ENCODE measurements at regions of chrX and their contacts with region 1.

Region 1: GRCh38 chrX:30713061-30713525 is 59.9 kb downstream of the GK start:
- DNase-seq: peak; percentile 82
- H3K4me3 Mint-ChIP-seq: peak overlapping the region; percentile 47
- H3K27ac Mint-ChIP-seq: peak overlapping the region; percentile 95
- H3K4me1 Mint-ChIP-seq: peaks cover 35% of the 10 kb centered on the region
- H3K27me3 Mint-ChIP-seq: no peaks in the 10 kb centered on the region

Region 2: DNA sequence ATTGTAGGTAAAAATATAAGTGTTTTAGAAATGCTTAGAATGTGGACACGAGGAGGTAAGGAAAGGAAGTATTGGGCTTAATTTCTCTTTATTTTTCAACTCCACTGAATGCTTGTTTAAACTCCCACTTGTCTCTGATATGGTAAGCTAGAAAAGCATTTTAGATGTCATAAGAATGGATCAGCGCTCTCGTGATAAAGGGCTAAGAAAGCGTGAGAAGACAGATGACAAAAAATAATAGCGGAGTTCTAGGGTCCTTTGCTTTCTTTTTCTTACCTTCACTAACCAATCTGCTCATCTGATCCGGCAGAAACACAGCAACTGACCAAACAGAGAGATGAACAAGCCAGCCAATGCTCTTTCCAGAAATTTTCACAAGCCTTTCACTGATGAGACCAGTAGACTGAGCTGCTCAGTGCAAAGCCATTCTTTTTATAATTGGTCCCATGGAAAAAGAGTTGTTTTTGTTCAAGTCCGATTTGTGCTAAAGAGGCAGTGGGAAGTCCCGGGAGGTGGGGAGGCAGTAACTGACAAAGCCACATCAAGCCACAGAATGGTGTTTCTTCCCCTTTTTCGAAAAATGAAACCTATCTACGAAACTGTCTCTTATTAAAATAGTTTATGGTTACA is 135.6 kb before region 1 on chrX and contains the start of gene TASL:
- intact Hi-C with region 1: loop called (anchors 2 kb)
- DNase-seq: peak; percentile 83
- H3K4me3 Mint-ChIP-seq: peak within 1 kb of the TSS; percentile 95
- H3K27ac Mint-ChIP-seq: peak within 1 kb of the TSS; percentile 98
- H3K4me1 Mint-ChIP-seq: peaks cover 13% of the 10 kb centered on the region
- H3K27me3 Mint-ChIP-seq: no peaks in the 10 kb centered on the region
- total RNA-seq, gene TASL: 4.2 and 5.1 TPM in 2 replicates

Region 3: GRCh38 chrX:30643313-30643821 is 69.7 kb before region 1 on chrX:
- intact Hi-C with region 1: loop called (anchors 1 kb)
- DNase-seq: peak; percentile 65
- H3K4me3 Mint-ChIP-seq: peak overlapping the region; percentile 9
- H3K27ac Mint-ChIP-seq: peak overlapping the region; percentile 91
- H3K4me1 Mint-ChIP-seq: peaks cover 23% of the 10 kb centered on the region
- H3K27me3 Mint-ChIP-seq: no peaks in the 10 kb centered on the region

Region 4: DNA sequence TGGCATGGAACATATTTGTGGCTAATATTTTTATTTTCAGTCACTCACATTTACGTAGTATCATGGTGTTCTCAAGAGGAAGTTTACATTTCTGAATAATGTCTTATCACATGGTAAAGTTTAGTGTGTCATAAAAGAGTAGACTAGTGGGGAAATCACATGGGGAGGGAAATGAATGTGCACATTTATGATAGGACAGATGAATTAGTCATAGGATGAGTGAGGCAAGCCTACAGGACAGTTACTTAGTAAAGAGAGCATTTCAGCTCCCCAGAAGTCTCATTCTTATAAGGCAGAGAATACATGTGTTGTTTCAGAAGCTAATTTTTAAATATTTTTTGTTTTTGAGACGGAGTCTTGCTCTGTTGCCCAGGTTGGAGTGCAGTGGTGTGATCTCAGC is 53.7 kb before region 1 on chrX:
- intact Hi-C with region 1: loop called (anchors 1 kb)
- DNase-seq: peak; percentile 59
- H3K4me3 Mint-ChIP-seq: peak overlapping the region; percentile 49
- H3K27ac Mint-ChIP-seq: peak overlapping the region; percentile 88
- H3K4me1 Mint-ChIP-seq: peaks cover 35% of the 10 kb centered on the region
- H3K27me3 Mint-ChIP-seq: no peaks in the 10 kb centered on the region

Region 5: DNA sequence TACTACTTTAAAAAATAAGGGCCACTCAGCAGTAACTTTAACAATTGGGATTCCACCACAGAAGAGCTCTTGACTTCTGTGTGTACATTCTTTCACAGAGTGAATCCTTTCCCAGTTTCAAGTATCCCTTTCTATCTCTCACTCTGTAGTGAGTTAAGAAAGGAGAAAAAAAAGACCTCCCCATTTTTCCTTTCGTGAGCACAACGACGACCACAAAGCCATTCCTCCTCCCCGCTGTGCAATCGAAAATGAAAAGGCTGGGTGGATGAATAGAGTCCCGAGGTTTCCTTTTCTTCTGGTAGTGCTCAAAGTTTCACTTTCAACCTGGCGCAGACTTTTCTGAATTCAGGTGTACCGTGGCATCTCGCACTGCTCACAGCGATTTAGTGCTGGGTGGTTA is 118.0 kb after region 1 on chrX:
- intact Hi-C with region 1: loop called (anchors 2 kb)
- DNase-seq: peak; percentile 83
- H3K4me3 Mint-ChIP-seq: peak overlapping the region; percentile 78
- H3K27ac Mint-ChIP-seq: peak overlapping the region; percentile 82
- H3K4me1 Mint-ChIP-seq: peaks cover 21% of the 10 kb centered on the region
- H3K27me3 Mint-ChIP-seq: no peaks in the 10 kb centered on the region

Region 6: DNA sequence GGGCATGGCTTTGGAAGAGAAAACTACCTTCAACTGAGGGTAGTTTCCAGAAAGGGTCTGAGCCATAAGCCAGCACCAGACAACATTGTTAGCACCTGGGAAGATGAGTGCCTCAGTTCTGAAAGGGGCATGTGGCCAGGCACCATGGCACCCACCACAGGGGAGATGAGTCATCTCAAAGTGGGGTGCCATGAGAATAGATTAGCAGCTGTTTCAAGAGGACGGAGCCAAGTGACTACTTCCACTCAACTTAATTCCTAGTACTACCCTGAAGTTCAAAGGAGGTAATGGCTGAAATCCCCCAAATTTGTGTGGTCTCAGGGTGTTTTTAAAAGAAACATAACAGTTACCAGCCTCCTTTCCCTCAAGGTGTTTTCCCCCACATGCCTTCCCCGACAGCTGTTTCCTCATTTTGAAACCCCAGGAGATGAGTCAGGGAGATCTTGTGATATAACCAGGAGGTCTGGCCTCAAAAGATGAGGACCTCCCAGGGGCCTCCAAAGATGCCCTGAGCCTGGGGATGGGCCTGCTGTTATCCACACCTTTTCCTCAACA is 386.5 kb after region 1 on chrX:
- intact Hi-C with region 1: loop called (anchors 10 kb)
- DNase-seq: peak; percentile 79
- H3K4me3 Mint-ChIP-seq: no peak overlapping the region
- H3K27ac Mint-ChIP-seq: peak overlapping the region; percentile 79
- H3K4me1 Mint-ChIP-seq: peaks cover 12% of the 10 kb centered on the region
- H3K27me3 Mint-ChIP-seq: no peaks in the 10 kb centered on the region

Measured in activated CD4-positive, alpha-beta T cell treated with anti-CD3 and anti-CD28 coated beads, Interleukin-2, amount 10 ng/mL, durations not matched to agents 24 days and 14 days (primary cell).